PC-3 (cell line): ENCODE measurements at regions of chr4 and their contacts with region 1.

Region 1: DNA sequence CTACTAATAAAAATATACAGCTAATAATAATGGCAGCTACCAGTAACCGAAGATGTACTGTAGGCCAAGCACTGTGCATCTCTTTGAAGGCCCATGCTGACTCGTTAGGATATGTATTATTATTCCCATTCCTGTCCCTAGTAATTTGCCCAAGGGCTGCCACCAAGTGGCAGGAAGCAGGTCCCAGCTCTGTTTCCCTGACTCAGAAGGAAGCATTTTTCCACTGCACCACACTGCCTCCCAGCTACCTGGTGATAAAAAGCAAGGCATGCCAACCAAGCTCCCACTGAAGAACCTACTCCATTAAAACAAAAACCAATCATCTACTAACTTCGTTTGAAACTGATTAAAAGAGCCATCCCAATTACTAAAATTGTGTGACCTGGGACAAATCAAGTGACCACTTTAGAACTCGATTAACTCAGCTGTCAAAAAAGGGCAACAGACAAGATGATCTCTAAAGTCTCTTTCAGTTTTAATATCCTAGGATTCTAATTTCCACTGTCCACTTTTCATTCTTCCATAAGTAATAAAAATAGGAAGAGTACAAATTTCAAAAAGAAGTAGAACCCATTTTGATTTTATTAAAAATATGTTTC is 24.3 kb upstream of the PGM2 start:
- DNase-seq: peak; percentile 84
- ATAC-seq: peak; percentile 99
- H3K4me3 ChIP-seq: peak overlapping the region; percentile 32; the same call in 1 of the 2 replicates
- H3K27ac ChIP-seq: no peak overlapping the region
- H3K4me1 ChIP-seq: no peaks in the 10 kb centered on the region
- H3K27me3 ChIP-seq: no peaks in the 10 kb centered on the region
- CTCF ChIP-seq: peak; percentile 80

Region 2: DNA sequence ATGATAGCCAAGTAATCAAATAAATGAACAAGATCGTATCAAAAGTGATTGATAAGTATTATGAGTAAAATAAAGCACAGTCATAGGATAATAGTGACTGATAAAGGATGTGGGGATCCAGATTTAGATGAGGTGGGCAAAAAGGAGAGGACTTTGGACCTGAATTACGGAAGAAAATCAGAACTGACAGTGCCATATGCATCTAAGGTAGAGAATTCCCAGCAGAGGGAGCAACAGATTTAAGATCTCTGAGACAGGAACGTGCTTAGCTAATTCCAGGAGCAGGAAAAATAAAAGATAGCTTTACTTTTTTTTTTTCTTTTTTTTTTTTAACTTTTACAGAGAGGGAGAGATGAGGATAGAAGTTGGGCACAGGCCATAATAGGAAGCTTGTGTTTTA is 367.7 kb before region 1 on chr4:
- CTCF ChIA-PET with region 1: interaction called, 6 read pairs
- POLR2A ChIA-PET with region 1: no interaction called
- intact Hi-C with region 1: loop called (anchors 5 kb)
- DNase-seq: peak; percentile 53
- ATAC-seq: peak; percentile 51; the same call in 1 of the 2 replicates
- H3K4me3 ChIP-seq: no peak overlapping the region
- H3K27ac ChIP-seq: no peak overlapping the region
- H3K4me1 ChIP-seq: peaks cover 14% of the 10 kb centered on the region
- H3K27me3 ChIP-seq: no peaks in the 10 kb centered on the region
- CTCF ChIP-seq: peak; percentile 59

Region 3: GRCh38 chr4:37603070-37603468 is 199.1 kb before region 1 on chr4:
- CTCF ChIA-PET with region 1: interaction called, 17 read pairs
- POLR2A ChIA-PET with region 1: no interaction called
- intact Hi-C with region 1: loop called (anchors 1 kb)
- DNase-seq: peak; percentile 72
- ATAC-seq: peak; percentile 87
- H3K4me3 ChIP-seq: no peak overlapping the region
- H3K27ac ChIP-seq: no peak overlapping the region
- H3K4me1 ChIP-seq: peaks cover 16% of the 10 kb centered on the region
- H3K27me3 ChIP-seq: no peaks in the 10 kb centered on the region
- CTCF ChIP-seq: peak; percentile 89

Region 4: GRCh38 chr4:37675587-37676290 is 126.4 kb before region 1 on chr4:
- CTCF ChIA-PET with region 1: no interaction called
- POLR2A ChIA-PET with region 1: no interaction called
- intact Hi-C with region 1: no loop called
- DNase-seq: no peak
- ATAC-seq: no peak
- H3K4me3 ChIP-seq: no peak overlapping the region
- H3K27ac ChIP-seq: no peak overlapping the region
- H3K4me1 ChIP-seq: no peaks in the 10 kb centered on the region
- H3K27me3 ChIP-seq: no peaks in the 10 kb centered on the region
- CTCF ChIP-seq: no peak

Region 5: GRCh38 chr4:37767546-37767945 is 34.6 kb before region 1 on chr4:
- CTCF ChIA-PET with region 1: no interaction called
- POLR2A ChIA-PET with region 1: no interaction called
- intact Hi-C with region 1: no loop called
- DNase-seq: no peak
- ATAC-seq: no peak
- H3K4me3 ChIP-seq: no peak overlapping the region
- H3K27ac ChIP-seq: no peak overlapping the region
- H3K4me1 ChIP-seq: no peaks in the 10 kb centered on the region
- H3K27me3 ChIP-seq: no peaks in the 10 kb centered on the region
- CTCF ChIP-seq: no peak

Region 6: GRCh38 chr4:37891260-37892159 is 89.3 kb after region 1 on chr4:
- CTCF ChIA-PET with region 1: no interaction called
- POLR2A ChIA-PET with region 1: no interaction called
- intact Hi-C with region 1: loop called (anchors 1 kb)
- DNase-seq: no peak
- ATAC-seq: peak; percentile 40; the same call in 1 of the 2 replicates
- H3K4me3 ChIP-seq: peak overlapping the region; percentile 69
- H3K27ac ChIP-seq: no peak overlapping the region
- H3K4me1 ChIP-seq: no peaks in the 10 kb centered on the region
- H3K27me3 ChIP-seq: no peaks in the 10 kb centered on the region
- CTCF ChIP-seq: no peak

Region 7: DNA sequence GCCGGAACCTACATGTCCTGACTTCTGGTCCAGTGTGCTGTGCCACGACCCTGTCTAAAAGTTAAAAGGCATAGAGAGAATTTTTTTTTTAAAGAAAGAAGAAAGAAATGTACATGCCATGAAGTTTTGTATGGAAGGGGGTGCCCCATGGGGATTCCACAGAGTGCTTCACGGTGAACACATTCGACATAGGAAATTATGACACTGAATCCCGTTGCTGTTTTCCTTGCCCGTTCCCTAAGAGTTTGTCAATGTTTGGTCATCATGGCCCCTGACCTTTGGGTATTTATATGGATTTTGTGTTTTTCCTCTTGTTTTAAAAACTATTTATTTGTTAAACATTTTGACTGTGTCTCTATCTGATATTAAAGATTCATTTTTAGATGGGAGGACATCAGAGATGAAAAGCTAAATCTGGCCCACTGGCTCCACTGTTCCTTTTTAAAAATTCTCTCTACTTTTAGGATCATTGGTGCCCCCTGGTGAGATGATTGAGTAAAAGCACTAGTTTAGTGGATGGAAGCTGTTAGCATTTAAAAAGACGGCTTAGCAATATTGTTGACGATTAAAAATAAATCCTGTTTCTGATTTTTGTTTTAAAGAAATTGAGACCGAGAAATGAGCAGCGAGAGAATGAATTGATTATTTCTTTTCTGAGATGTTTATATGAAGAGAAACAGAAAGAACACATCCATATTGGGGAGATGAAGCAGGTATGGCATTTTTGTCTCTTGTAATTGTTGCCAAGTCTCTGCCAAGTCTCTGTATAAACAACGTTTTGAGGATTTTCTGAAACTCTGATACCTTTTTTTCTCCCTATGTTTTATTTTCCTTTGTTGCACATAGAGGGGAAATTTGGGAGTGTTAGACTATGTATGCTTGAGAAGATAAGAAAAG is 233.1 kb after region 1 on chr4:
- CTCF ChIA-PET with region 1: interaction called, 3 read pairs
- POLR2A ChIA-PET with region 1: no interaction called
- intact Hi-C with region 1: loop called (anchors 1 kb)
- DNase-seq: peak; percentile 67
- ATAC-seq: peak; percentile 63
- H3K4me3 ChIP-seq: no peak overlapping the region
- H3K27ac ChIP-seq: no peak overlapping the region
- H3K4me1 ChIP-seq: peaks cover 2% of the 10 kb centered on the region; the same call in 1 of the 2 replicates
- H3K27me3 ChIP-seq: no peaks in the 10 kb centered on the region
- CTCF ChIP-seq: peak; percentile 71